Posterior vena cava (tissue), 2 donors: ENCODE measurements at regions of chr17 and their contacts with region 1.

Region 1: GRCh38 chr17:78970834-78971773 is 8.6 kb downstream of the LGALS3BP start:
- DNase-seq: peak; percentile 93

Region 2: DNA sequence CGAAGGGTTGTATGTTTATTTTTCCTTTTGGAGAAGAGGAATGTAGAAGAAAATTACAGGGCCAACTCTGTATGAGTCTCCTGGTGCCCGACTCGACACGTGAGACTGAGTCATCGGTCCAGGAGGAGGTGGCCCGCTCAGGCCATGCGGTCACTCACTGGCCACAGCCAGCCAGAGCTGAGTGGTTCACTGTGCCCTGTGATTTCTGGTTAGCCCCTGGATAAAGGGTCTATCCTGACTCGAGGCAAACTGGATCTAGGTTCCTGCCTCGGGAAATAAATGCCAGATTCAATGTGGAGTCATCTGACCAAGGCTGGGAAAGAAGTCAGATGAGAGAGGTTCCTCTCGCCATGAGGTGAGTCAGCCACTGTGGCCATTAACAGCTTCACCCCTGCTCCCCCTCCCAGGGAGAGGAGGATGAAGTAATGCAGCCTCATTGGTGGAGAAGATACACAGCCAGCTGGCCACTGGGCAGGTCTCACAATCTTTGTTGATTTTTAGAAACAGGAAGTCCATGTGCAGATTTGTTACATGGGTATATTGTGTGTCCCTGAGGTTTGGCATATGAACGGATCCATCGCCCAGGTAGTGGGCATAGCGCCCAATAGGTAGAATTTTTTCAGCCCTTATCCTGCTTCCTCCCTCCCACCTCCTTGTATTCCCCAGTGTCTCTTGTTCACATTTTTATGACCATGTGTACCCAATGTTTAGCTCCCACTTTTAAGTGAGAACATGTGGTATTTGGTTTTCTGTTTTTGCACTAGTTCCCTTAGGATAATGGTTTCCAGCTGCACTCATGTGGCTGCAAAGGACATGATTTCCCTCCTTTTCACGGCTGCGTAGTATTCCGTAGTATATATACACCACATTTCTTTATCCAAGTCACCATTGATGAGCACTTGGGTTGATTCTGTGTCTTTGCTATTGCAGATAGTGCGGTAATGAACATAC is 108.8 kb before region 1 on chr17:
- intact Hi-C with region 1: loop called (anchors 5 kb)
- DNase-seq: peak; percentile 97

Region 3: DNA sequence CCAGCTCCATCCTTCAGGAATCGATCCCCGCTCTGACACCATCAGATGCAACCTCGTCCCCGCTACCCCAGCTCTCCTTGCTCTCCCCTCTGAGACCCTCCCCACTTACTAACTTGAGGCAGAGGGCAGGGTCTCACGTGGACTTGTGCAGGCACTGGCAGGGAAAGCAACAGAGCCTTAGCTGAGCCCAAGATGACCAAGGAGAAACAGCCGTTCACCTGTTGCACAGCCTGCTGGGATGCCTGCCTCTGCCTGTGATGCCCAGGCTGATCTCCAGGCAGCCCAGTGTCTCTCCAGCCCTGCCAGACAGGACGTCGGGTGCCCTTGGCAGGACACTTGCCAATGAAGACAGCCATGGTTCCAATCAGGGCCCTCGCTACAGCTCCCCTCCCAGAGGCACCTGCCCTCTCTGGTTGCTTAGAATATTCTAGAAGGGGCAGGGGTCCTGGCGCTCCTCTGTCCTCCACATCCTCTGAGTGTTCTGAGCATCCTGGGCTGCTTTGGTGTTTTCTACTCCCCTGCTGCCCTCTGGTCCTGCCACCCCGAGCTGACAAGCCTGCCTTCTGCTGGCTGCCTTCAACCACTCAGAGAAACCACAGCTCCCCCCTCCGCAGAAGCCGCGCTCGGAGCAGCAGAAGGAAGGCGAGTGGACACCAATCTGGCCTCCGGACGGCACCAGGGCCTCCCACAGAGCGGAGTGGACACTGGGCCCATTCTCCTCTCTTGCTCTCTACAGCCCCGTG is 74.8 kb before region 1 on chr17:
- intact Hi-C with region 1: loop called in 1 of 2 experiments (anchors 2 kb)
- DNase-seq: no peak